Calu3 (cell line): ENCODE measurements at regions of chr3 and their contacts with region 1.

Region 1: GRCh38 chr3:100650651-100651611 is 41.5 kb downstream of the ADGRG7 start:
- DNase-seq: no peak
- H3K4me3 Mint-ChIP-seq: peak overlapping the region; percentile 21
- H3K27ac Mint-ChIP-seq: peak overlapping the region; percentile 89
- H3K4me1 Mint-ChIP-seq: peaks cover 16% of the 10 kb centered on the region
- H3K27me3 Mint-ChIP-seq: no peaks in the 10 kb centered on the region
- CTCF ChIP-seq: no peak

Region 2: GRCh38 chr3:100697172-100697571 is 46.2 kb after region 1 on chr3:
- CTCF ChIA-PET with region 1: no interaction called
- intact Hi-C with region 1: loop called (anchors 5 kb)
- DNase-seq: peak; percentile 67
- H3K4me3 Mint-ChIP-seq: peak overlapping the region; percentile 17
- H3K27ac Mint-ChIP-seq: peak overlapping the region; percentile 71
- H3K4me1 Mint-ChIP-seq: peaks cover 60% of the 10 kb centered on the region
- H3K27me3 Mint-ChIP-seq: no peaks in the 10 kb centered on the region
- CTCF ChIP-seq: no peak

Region 3: GRCh38 chr3:100708967-100709841 is 58.3 kb after region 1 on chr3 and contains the start of gene TFG:
- CTCF ChIA-PET with region 1: no interaction called
- intact Hi-C with region 1: loop called (anchors 2 kb)
- DNase-seq: peak; percentile 98
- H3K4me3 Mint-ChIP-seq: peak within 1 kb of the TSS; percentile 80
- H3K27ac Mint-ChIP-seq: peak within 1 kb of the TSS; percentile 94
- H3K4me1 Mint-ChIP-seq: peaks cover 41% of the 10 kb centered on the region
- H3K27me3 Mint-ChIP-seq: no peaks in the 10 kb centered on the region
- CTCF ChIP-seq: no peak
- total RNA-seq, gene TFG: 139 and 143 TPM in 2 replicates